ENCODE measurements at regions of chr19 and their contacts with region 1.

Region 1: DNA sequence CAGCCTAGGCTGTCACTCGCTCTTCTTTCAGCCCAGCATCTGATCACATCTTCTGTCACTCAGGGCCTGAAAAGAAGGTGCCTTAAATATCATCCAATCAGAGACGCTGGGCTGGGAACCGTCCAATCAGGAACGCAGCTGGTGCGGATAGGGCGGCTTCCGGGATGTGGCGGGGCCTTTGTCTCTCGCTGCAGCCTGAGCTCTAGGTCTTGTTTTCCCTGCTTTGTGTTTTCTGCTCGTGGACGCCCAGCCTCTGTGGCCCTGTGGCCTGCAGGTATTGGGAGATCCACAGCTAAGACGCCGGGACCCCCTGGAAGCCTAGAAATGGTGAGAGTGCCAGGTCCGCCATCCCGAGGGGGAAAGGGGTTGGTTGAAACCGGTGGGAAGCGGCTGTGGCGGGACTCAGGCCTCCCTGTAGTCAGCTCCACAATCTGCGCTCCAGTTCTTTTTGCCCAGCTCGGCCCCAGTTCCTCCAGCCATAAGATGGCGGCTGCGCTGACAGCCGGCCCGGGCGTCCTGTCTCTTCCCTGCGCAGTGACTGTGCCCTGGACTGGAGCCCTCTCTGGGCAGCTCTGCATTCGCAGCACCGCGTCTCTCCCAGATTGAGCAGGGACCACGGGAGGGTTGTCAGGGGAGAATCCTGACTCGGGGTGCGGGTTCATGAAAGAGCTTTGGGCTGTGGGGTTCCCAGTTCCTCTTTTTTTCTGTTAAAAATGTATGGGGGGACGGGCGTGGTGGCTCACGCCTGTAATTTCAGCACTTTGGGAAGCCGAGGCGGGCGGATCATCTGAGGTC is at the start of gene ZNF85:
- DNase-seq: peak; percentile 92
- ATAC-seq: peak; percentile 98
- H3K4me3 ChIP-seq: peak within 1 kb of the TSS; percentile 48 to 84 (median 69)
- H3K4me3 Mint-ChIP-seq: peak within 1 kb of the TSS; percentile 98
- H3K27ac ChIP-seq: peak within 1 kb of the TSS; percentile 90 to 92
- H3K27ac Mint-ChIP-seq: peak within 1 kb of the TSS; percentile 96
- H3K4me1 ChIP-seq: peaks cover 4 to 9% of the 10 kb centered on the region in 2 donors
- H3K4me1 Mint-ChIP-seq: peaks cover 16% of the 10 kb centered on the region
- H3K27me3 ChIP-seq: no peaks in the 10 kb centered on the region
- H3K27me3 Mint-ChIP-seq: no peaks in the 10 kb centered on the region
- CTCF ChIP-seq: no peak
- total RNA-seq, gene ZNF85: 17.1 and 20.5 TPM in 2 replicates

Region 2: GRCh38 chr19:20453425-20453935 is 469.8 kb before region 1 on chr19:
- CTCF ChIA-PET with region 1: no interaction called
- POLR2A ChIA-PET with region 1: no interaction called
- intact Hi-C with region 1: no loop called
- DNase-seq: no peak
- ATAC-seq: no peak
- H3K4me3 ChIP-seq: no peak overlapping the region
- H3K4me3 Mint-ChIP-seq: no peak overlapping the region
- H3K27ac ChIP-seq: no peak overlapping the region
- H3K27ac Mint-ChIP-seq: no peak overlapping the region
- H3K4me1 ChIP-seq: no peaks in the 10 kb centered on the region
- H3K4me1 Mint-ChIP-seq: peaks cover 5% of the 10 kb centered on the region
- H3K27me3 ChIP-seq: no peaks in the 10 kb centered on the region
- H3K27me3 Mint-ChIP-seq: no peaks in the 10 kb centered on the region
- CTCF ChIP-seq: no peak

Region 3: GRCh38 chr19:20565321-20566018 is 357.8 kb before region 1 on chr19 and contains the start of gene ZNF737:
- CTCF ChIA-PET with region 1: no interaction called
- POLR2A ChIA-PET with region 1: no interaction called
- intact Hi-C with region 1: loop called (anchors 2 kb)
- DNase-seq: peak; percentile 93
- ATAC-seq: peak; percentile 92
- H3K4me3 ChIP-seq: peak within 1 kb of the TSS; percentile 38 to 87 (median 80)
- H3K4me3 Mint-ChIP-seq: peak within 1 kb of the TSS; percentile 98
- H3K27ac ChIP-seq: peak within 1 kb of the TSS; percentile 93 to 96
- H3K27ac Mint-ChIP-seq: peak within 1 kb of the TSS; percentile 99
- H3K4me1 ChIP-seq: peaks cover 6 to 15% of the 10 kb centered on the region in 2 donors
- H3K4me1 Mint-ChIP-seq: peaks cover 32% of the 10 kb centered on the region
- H3K27me3 ChIP-seq: no peaks in the 10 kb centered on the region
- H3K27me3 Mint-ChIP-seq: no peaks in the 10 kb centered on the region
- CTCF ChIP-seq: no peak
- total RNA-seq, gene ZNF737: 45.6 and 50.1 TPM in 2 replicates

Region 4: DNA sequence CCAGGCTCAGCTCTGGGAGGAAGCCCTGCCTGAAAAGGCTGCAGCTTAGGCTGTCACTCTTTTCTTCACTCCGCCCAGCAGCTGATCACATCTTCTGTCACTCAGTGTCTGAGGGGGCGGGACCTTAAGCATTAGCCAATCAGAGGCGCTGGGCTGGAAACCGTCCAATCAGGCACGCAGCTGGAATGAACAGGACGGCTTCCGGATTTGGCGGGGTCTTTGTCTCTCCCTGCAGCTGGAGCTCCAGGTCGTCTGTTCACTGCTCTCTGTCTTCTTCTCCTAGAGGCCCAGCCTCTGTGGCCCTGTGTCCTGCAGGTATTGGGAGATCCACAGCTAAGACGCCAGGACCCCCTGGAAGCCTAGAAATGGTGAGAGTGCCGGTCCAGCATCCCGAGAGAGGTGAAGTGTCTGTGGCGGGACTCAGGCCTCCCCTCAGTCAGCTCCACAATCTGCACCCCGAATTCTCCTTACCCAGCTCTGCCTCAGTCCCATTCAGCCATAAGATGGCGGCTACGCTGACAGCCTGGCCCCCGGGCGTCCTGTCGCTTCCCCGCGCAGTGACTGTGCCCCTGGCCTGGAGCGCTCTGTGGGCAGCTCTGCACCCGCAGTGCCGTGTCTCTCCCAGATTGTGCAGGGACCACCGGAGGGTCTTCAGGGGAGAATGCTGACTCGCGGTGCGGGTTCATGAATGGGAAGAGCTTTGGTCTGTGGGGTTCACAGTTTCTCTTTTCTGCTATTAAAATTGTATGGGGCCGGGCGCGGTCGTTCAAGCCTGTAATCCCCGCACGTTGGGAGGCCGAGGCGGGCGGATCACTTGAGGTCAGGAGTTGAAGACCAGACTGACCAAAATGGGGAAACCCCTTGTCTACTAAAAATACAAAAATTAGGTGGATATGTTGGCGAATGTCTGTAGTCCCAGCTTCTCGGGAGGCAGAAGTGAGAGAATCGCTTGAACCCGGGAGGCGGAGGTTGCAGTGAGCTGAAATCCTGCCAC is 146.9 kb before region 1 on chr19 and contains the start of gene ZNF66:
- CTCF ChIA-PET with region 1: no interaction called
- POLR2A ChIA-PET with region 1: interaction called, 4 read pairs
- intact Hi-C with region 1: loop called (anchors 1 kb)
- DNase-seq: peak; percentile 95
- ATAC-seq: peak; percentile 98
- H3K4me3 ChIP-seq: peak within 1 kb of the TSS; percentile 74 to 91 (median 80)
- H3K4me3 Mint-ChIP-seq: peak within 1 kb of the TSS; percentile 97
- H3K27ac ChIP-seq: peak within 1 kb of the TSS; percentile 66 to 90
- H3K27ac Mint-ChIP-seq: peak within 1 kb of the TSS; percentile 91
- H3K4me1 ChIP-seq: peaks cover 0 to 5% of the 10 kb centered on the region in 2 donors
- H3K4me1 Mint-ChIP-seq: peaks cover 29% of the 10 kb centered on the region
- H3K27me3 ChIP-seq: no peaks in the 10 kb centered on the region
- H3K27me3 Mint-ChIP-seq: no peaks in the 10 kb centered on the region
- CTCF ChIP-seq: no peak
- total RNA-seq, gene ZNF66: 25.0 and 27.7 TPM in 2 replicates

Region 5: DNA sequence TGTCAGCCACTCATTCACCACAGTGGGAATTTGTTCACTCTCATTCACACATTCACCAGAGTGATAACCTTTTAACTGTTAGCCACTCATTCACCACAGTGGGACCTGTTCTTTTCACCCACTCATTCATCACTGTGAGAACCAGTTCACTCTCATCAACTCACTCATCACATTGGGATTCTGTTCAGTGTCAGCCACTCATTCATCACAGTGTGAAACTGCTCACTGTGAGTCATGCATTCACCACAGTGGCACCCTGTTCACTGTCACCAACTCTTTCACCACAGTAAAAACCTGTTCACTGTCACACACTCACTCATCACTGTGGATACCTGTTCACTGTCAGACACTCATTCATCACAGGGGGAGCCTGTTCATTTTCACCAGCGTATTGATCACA is 43.8 kb before region 1 on chr19:
- CTCF ChIA-PET with region 1: no interaction called
- POLR2A ChIA-PET with region 1: no interaction called
- intact Hi-C with region 1: no loop called
- DNase-seq: no peak
- ATAC-seq: no peak
- H3K4me3 ChIP-seq: no peak overlapping the region
- H3K4me3 Mint-ChIP-seq: no peak overlapping the region
- H3K27ac ChIP-seq: no peak overlapping the region
- H3K27ac Mint-ChIP-seq: no peak overlapping the region
- H3K4me1 ChIP-seq: no peaks in the 10 kb centered on the region
- H3K4me1 Mint-ChIP-seq: no peaks in the 10 kb centered on the region
- H3K27me3 ChIP-seq: no peaks in the 10 kb centered on the region
- H3K27me3 Mint-ChIP-seq: peaks cover 3% of the 10 kb centered on the region
- CTCF ChIP-seq: no peak

Region 6: DNA sequence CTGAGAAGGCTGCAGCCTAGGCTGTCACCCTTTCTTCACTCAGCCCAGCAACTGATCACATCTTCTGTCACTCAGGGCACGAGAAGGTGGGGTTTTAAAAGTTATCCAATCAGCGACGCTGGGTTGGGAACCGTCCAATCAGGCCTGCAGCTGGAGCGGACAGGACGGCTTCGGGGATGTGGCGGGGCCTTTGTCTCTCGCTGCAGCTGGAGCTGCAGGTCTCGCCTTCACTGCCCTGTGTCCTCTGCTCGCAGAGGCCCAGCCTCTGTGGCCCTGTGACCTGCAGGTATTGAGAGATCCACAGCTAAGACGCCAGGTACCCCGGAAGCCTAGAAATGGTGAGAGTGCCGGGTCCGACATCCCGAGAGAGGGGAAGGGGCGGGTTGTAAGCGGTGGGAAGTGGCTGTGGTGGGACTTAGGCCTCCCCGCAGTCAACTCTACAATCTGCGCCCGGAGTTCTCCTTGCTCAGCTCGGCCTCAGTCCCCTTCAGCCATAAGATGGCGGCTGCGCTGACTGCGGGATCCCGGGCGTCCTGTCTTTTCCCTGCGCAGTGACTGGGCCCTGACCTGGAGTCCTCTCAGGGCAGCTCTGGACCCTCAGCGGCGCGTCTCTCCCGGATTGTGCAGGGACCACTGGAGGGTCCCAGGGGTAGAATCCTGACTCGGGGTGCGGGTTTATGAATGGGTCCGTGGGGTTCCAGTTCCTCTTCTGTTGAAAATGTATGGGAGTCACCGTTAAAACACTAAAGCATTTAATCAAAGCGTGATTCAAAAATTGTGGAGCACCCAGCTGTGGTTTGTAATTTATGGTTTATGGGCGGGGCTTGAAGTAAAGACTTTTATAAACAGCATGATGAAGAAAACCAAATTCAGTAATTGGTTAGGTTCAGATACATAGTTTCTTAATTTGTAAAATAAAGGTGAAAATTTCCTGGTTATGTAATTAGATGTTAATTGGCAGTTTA is 159.0 kb after region 1 on chr19 and contains the start of gene ZNF714:
- CTCF ChIA-PET with region 1: no interaction called
- POLR2A ChIA-PET with region 1: no interaction called
- intact Hi-C with region 1: loop called (anchors 1 kb)
- DNase-seq: peak; percentile 84
- ATAC-seq: peak; percentile 100
- H3K4me3 ChIP-seq: peak within 1 kb of the TSS in 4 of 5 experiments; percentile 87 to 96 (median 90)
- H3K4me3 Mint-ChIP-seq: peak within 1 kb of the TSS; percentile 99
- H3K27ac ChIP-seq: peak within 1 kb of the TSS; percentile 52 to 57
- H3K27ac Mint-ChIP-seq: peak within 1 kb of the TSS; percentile 94
- H3K4me1 ChIP-seq: peaks cover 0 to 3% of the 10 kb centered on the region in 2 donors
- H3K4me1 Mint-ChIP-seq: peaks cover 14% of the 10 kb centered on the region
- H3K27me3 ChIP-seq: no peaks in the 10 kb centered on the region
- H3K27me3 Mint-ChIP-seq: no peaks in the 10 kb centered on the region
- CTCF ChIP-seq: no peak
- total RNA-seq, gene ZNF714: 10.7 and 11.9 TPM in 2 replicates